ENCODE measurements at regions of chr10 and their contacts with region 1.

Region 1: DNA sequence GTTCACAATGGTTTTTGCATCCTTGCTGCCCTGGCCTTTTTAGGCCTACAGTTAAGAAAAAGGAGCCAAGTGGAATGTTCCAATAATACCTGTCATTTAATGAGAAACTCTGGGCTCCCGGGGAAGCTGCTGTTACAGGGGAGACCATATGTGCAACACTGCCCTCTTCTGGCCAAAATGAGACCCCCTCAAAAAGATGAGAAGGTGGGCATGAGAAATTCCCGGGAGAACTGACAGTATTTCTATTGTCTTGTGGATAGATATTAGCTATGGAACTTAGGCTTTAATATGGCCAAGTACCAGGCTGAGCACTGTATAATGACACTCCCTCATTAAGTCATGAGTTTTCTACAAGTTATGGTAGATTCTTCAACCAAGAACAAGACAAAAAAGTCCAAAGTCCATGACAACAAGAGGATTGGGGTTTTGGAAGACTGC is 99.4 kb downstream of the CCDC3 start:
- DNase-seq: peak; percentile 56 to 78 (median 62)
- H3K4me3 ChIP-seq: no peak overlapping the region
- H3K27ac ChIP-seq: no peak overlapping the region
- H3K4me1 ChIP-seq: peaks cover 4% of the 10 kb centered on the region
- H3K27me3 ChIP-seq: no peaks in the 10 kb centered on the region
- CTCF ChIP-seq: peak; percentile 53 to 74 (median 61)
- EP300 ChIP-seq: no peak
- POLR2A ChIP-seq: no peak

Region 2: GRCh38 chr10:12466704-12467305 is 435.3 kb before region 1 on chr10:
- intact Hi-C with region 1: loop called in 1 of 4 experiments (anchors 5 kb)
- DNase-seq: no peak
- H3K4me3 ChIP-seq: no peak overlapping the region
- H3K27ac ChIP-seq: no peak overlapping the region
- H3K4me1 ChIP-seq: no peaks in the 10 kb centered on the region
- H3K27me3 ChIP-seq: no peaks in the 10 kb centered on the region
- CTCF ChIP-seq: no peak
- EP300 ChIP-seq: no peak
- POLR2A ChIP-seq: no peak

Region 3: DNA sequence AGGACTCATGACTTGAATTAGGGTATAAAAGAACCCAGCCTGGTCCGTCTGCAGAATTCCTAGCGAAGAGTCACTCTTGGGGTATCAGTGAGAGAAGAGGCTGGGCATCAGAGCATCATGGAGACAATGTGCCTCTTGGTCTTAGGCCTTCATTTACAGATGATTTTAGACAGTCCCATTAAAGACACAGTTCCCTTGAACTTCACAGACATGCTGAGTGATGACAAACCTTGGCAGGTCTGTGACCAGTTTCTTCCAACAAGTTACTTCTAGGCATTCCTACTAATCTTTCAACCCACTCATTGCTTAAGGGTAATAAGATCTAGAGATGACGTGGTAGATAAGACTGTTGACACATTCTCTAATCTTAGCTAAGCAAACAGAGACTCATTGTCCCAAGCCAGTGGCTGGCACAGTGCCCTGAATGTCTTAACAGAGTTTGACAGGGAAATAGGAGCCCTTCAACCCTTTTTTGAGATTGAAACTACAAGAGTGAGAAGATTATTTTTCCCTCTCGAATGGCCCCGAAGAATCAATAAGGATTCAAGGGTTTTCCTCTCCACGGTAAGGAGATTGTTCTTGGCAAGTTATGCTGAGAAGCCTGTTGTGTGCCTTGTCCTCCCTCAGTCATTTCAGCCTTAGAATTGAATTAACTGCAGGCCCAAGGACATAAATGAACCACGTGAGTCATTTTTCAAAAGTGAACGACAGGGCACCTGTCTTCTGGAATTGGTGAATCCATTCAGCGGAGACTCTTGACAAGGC is 181.8 kb before region 1 on chr10:
- intact Hi-C with region 1: loop called (anchors 5 to 10 kb)
- DNase-seq: peak in 1 of 5 donors; percentile 39
- H3K4me3 ChIP-seq: no peak overlapping the region
- H3K27ac ChIP-seq: no peak overlapping the region
- H3K4me1 ChIP-seq: no peaks in the 10 kb centered on the region
- H3K27me3 ChIP-seq: no peaks in the 10 kb centered on the region
- CTCF ChIP-seq: no peak
- EP300 ChIP-seq: no peak
- POLR2A ChIP-seq: no peak

Region 4: DNA sequence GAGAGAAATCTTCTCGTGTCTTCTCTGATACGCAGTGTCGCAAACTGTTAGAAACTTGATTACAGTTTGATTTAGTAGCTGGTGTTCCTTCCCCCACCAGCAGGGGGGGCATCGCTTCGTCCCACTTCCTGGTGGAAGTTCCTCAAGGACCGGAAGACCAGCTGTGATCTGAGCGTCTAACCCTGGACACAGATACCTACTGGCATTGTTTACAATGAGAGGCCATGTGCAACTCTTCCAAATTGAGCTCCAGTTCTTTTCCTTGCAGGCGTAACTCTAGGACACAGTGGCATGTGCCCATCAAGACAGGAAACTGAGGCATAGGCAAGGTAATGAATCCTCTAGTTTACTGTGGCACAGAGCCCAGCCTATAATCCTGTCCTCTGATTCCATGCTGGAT is 119.6 kb before region 1 on chr10:
- intact Hi-C with region 1: loop called in 3 of 4 experiments (anchors 5 to 10 kb)
- DNase-seq: peak; percentile 26 to 65 (median 49)
- H3K4me3 ChIP-seq: no peak overlapping the region
- H3K27ac ChIP-seq: no peak overlapping the region
- H3K4me1 ChIP-seq: peaks cover 2% of the 10 kb centered on the region
- H3K27me3 ChIP-seq: no peaks in the 10 kb centered on the region
- CTCF ChIP-seq: peak; percentile 34 to 62 (median 48)
- EP300 ChIP-seq: no peak
- POLR2A ChIP-seq: no peak

Region 5: DNA sequence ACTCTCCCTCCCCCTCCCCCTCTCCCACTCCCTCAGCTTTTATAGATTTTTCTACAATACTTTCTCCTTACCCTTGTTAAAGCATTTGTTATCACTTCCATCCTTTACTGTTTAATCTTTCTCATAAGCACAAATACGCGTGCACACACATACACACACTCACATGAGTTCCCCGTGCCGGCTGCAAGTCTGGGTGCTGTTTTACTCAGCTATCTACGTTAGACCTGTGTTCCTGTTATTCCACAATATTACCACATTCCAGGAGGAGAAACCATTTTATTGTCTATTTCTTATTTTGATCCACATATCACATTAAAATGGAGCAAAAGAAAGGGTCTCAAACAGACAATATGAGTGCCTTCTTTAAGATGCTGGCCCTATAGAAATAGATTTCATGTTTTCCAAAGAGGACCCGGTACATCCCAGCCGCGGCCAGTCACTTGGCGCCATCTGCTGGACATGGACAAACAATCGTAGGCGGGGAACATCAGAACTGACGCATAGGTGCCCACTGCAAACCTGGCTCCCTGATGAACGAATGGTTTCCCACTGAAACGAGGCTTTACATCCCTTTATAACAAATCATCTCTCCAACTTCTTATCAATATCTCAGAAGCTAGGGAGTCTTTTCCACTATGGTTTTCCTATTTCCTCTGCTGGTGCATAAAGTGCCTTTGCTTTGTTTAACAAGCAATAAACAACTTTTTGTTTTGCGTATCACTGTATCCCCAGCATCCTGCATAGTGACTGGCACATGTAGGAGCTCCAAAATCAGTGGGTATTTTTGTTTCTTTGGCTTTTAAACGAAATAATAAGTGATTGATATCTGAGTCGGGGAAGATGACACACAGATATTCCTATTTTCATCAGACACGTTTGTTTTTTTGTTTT is 172.7 kb after region 1 on chr10:
- intact Hi-C with region 1: loop called in 1 of 4 experiments (anchors 10 kb)
- DNase-seq: peak; percentile 63 to 77 (median 76)
- H3K4me3 ChIP-seq: no peak overlapping the region
- H3K27ac ChIP-seq: no peak overlapping the region
- H3K4me1 ChIP-seq: no peaks in the 10 kb centered on the region
- H3K27me3 ChIP-seq: no peaks in the 10 kb centered on the region
- CTCF ChIP-seq: peak; percentile 69 to 79 (median 71)
- EP300 ChIP-seq: no peak
- POLR2A ChIP-seq: no peak